Calu3 (cell line): ENCODE measurements at regions of chr6 and their contacts with region 1.

Region 1: GRCh38 chr6:44074439-44075136 is 52.7 kb downstream of the MRPL14 start:
- DNase-seq: peak; percentile 83
- H3K4me3 Mint-ChIP-seq: peak overlapping the region; percentile 87
- H3K27ac Mint-ChIP-seq: peak overlapping the region; percentile 89
- H3K4me1 Mint-ChIP-seq: peaks cover 89% of the 10 kb centered on the region
- H3K27me3 Mint-ChIP-seq: no peaks in the 10 kb centered on the region
- CTCF ChIP-seq: peak; percentile 96

Region 2: GRCh38 chr6:43608310-43608763 is 466.3 kb before region 1 on chr6:
- CTCF ChIA-PET with region 1: interaction called, 5 read pairs
- intact Hi-C with region 1: loop called (anchors 1 kb)
- DNase-seq: peak; percentile 83
- H3K4me3 Mint-ChIP-seq: no peak overlapping the region
- H3K27ac Mint-ChIP-seq: peak overlapping the region; percentile 48
- H3K4me1 Mint-ChIP-seq: peaks cover 15% of the 10 kb centered on the region
- H3K27me3 Mint-ChIP-seq: no peaks in the 10 kb centered on the region
- CTCF ChIP-seq: peak; percentile 91

Region 3: DNA sequence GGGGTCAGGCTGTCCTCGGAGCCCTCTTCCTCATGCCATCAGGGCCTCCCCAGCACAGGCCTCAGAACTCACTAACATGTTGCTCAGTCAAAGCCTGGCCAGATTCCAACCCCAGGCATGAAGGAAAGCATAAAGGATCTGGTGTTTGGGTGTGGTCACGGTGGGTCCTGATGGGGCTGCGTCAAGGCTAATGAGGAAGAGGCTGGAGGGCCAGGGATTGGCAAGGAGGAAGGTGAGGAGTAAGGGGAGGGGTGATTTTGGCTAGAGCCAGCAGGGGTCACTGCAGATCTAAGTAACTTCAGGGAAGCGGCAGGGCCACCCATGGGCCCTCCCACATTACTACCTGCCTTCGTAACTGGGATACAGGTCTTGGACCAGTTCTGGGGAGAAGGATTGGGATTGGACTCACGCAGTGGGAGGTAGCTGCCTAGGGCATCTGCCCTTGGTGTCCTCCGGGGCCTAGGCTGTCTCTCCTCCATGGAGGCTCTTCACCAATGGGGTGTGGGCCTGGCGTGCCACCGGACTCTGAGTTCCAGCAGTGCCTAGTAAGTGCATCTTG is 350.8 kb before region 1 on chr6:
- CTCF ChIA-PET with region 1: interaction called, 38 read pairs
- intact Hi-C with region 1: loop called (anchors 1 kb)
- DNase-seq: peak; percentile 95
- H3K4me3 Mint-ChIP-seq: peak overlapping the region; percentile 50
- H3K27ac Mint-ChIP-seq: peak overlapping the region; percentile 97
- H3K4me1 Mint-ChIP-seq: peaks cover 52% of the 10 kb centered on the region
- H3K27me3 Mint-ChIP-seq: peaks cover 10% of the 10 kb centered on the region
- CTCF ChIP-seq: peak; percentile 89

Region 4: DNA sequence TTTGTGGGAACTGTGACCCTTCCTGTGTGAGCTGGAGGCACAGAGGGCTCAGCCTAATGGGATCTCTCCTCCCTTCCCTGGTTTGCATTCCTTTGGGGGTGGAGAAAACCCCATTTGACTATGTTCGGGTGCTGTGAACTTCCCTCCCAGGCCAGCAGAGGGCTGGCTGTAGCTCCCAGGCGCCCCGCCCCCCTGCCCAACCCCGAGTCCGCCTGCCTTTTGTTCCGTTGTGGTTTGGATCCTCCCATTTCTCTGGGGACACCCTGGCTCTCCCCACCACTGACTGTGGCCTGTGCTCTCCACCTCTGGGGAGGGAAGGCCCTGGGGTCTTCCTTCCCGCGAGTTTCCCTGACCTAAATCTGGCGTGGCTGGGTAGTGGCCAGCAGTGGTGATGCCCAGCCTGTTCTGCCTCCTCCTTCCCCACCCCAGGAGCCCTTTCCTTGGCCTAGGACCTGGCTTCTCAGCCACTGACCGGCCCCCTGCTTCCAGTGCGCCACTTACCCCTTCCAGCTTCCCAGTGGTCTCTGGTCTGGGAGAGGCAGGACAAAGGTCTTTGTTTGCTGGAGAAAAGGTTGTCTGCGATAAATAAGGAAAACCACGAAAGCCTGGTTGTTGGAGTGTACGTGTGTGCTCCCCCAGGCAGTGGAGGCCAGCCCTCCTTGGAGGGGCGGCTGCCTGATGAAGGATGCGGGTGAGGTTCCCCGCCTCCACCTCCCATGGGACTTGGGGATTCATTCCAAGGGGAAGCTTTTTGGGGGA is 299.6 kb before region 1 on chr6:
- CTCF ChIA-PET with region 1: interaction called, 30 read pairs
- intact Hi-C with region 1: loop called (anchors 1 kb)
- DNase-seq: peak; percentile 88
- H3K4me3 Mint-ChIP-seq: peak overlapping the region; percentile 87
- H3K27ac Mint-ChIP-seq: peak overlapping the region; percentile 85
- H3K4me1 Mint-ChIP-seq: peaks cover 45% of the 10 kb centered on the region
- H3K27me3 Mint-ChIP-seq: no peaks in the 10 kb centered on the region
- CTCF ChIP-seq: peak; percentile 98

Region 5: GRCh38 chr6:43798688-43799444 is 275.7 kb before region 1 on chr6:
- CTCF ChIA-PET with region 1: no interaction called
- intact Hi-C with region 1: no loop called
- DNase-seq: peak; percentile 95
- H3K4me3 Mint-ChIP-seq: peak overlapping the region; percentile 35
- H3K27ac Mint-ChIP-seq: peak overlapping the region; percentile 83
- H3K4me1 Mint-ChIP-seq: peaks cover 66% of the 10 kb centered on the region
- H3K27me3 Mint-ChIP-seq: no peaks in the 10 kb centered on the region
- CTCF ChIP-seq: no peak

Region 6: GRCh38 chr6:43926634-43927524 is 147.7 kb before region 1 on chr6:
- CTCF ChIA-PET with region 1: interaction called, 29 read pairs
- intact Hi-C with region 1: loop called (anchors 1 kb)
- DNase-seq: peak; percentile 98
- H3K4me3 Mint-ChIP-seq: peak overlapping the region; percentile 41
- H3K27ac Mint-ChIP-seq: peak overlapping the region; percentile 97
- H3K4me1 Mint-ChIP-seq: peaks cover 36% of the 10 kb centered on the region
- H3K27me3 Mint-ChIP-seq: no peaks in the 10 kb centered on the region
- CTCF ChIP-seq: no peak

Region 7: GRCh38 chr6:44010411-44011349 is 63.9 kb before region 1 on chr6:
- CTCF ChIA-PET with region 1: interaction called, 33 read pairs
- intact Hi-C with region 1: loop called (anchors 1 kb)
- DNase-seq: peak; percentile 74
- H3K4me3 Mint-ChIP-seq: no peak overlapping the region
- H3K27ac Mint-ChIP-seq: peak overlapping the region; percentile 58
- H3K4me1 Mint-ChIP-seq: peaks cover 57% of the 10 kb centered on the region
- H3K27me3 Mint-ChIP-seq: no peaks in the 10 kb centered on the region
- CTCF ChIP-seq: no peak

Region 8: DNA sequence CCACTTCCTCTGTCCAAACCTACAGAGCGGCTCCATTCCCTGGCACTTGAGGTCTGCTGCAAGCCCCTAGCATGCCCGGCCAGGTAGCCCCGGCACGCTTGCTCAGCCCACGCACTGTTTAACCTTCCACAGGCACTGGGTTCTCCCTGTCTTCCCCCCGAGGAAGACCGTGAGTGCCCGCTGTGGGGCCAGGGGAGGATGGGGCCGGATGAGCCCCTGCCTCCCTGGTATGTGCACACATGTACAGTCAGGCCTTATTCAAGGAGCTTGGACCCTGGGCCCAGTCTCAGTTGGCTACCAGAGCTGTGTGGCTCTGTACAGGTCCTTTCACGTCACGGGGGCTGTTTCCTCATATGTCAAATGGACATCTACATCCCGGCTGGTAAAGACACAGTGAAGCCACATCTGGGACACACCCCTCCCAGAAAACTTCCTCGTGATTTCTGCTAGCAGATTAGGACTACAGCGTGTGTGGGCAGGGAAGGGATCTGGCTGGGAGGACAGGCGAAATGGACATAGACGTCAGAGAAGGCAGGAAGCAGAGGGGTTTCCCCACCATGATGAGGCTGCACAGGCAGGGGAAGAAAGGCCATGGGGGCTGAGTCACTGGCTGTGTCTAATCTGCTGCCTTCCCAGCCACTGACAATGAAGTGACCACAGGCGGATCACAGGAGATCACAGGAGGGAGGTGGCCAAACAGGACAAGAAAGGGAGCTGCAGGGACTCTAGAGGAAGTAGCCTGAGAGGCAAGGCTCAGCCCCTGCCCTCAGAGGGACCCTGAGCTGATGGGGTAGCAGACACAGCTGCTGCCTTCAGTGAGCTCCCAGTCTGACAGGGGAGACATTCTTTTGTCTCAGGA is 10.3 kb before region 1 on chr6:
- CTCF ChIA-PET with region 1: interaction called, 17 read pairs
- intact Hi-C with region 1: no loop called
- DNase-seq: peak; percentile 88
- H3K4me3 Mint-ChIP-seq: peak overlapping the region; percentile 1
- H3K27ac Mint-ChIP-seq: peak overlapping the region; percentile 63
- H3K4me1 Mint-ChIP-seq: peaks cover 40% of the 10 kb centered on the region
- H3K27me3 Mint-ChIP-seq: no peaks in the 10 kb centered on the region
- CTCF ChIP-seq: no peak

Region 9: DNA sequence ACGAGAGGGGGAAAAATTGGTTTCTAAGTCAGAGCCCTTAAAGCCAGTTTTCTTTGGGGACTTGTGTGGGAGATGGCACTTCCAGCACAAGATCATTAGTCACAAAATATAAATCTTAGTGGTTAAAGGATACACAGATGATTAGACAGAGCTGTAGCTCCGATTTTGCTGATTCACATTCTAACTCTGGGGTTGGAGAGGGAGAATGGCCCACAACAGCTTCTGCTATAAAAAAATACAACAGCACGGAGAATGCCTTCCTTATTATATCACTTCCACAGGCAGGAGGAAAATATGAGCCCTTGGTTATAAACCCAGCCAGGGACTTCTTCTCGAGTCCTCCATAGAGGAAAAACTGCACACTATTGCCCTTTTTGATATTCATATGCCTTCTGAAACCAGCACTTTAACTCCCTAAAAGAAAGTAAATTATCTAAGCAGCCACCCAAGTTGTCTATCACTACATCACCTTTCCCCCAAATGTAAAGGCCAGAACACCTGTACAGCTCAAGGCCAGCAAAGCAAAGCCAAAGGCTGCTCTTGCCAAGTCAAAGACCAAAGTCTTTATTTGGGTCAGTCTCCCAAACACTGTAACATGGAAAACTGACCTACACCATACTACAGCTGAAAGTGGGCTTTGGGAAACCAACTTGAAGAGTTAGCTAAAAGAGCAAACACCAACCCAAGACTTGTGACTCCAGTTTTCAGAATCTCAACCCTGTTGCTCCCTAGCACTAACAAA is 42.2 kb after region 1 on chr6:
- CTCF ChIA-PET with region 1: no interaction called
- intact Hi-C with region 1: no loop called
- DNase-seq: no peak
- H3K4me3 Mint-ChIP-seq: peak overlapping the region; percentile 10
- H3K27ac Mint-ChIP-seq: peak overlapping the region; percentile 70
- H3K4me1 Mint-ChIP-seq: peaks cover 71% of the 10 kb centered on the region
- H3K27me3 Mint-ChIP-seq: no peaks in the 10 kb centered on the region
- CTCF ChIP-seq: no peak